Posterior vena cava (tissue), 2 donors: ENCODE measurements at regions of chr15 and their contacts with region 1.

Region 1: GRCh38 chr15:77118882-77119321 is 48.0 kb upstream of the TSPAN3 start:
- DNase-seq: no peak

Region 2: DNA sequence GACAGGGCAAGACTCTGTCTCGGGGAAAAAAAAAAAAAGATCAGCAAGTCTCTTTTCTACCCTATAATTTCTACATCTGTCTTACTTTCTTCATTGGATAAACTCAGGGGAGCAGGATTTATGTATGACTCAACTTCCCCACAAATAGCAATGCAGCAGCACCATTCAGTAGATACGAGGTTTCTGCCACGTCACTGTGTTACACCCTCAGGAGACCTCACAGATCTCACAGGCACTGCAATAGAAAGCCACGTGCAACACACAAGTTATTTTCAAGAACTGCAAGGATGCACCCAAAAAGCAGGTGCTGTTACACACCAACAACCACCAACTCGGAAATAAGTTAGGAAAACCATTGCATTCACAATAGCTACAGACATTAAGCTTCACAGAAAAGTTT is 78.2 kb before region 1 on chr15:
- intact Hi-C with region 1: no loop called
- DNase-seq: no peak

Region 3: GRCh38 chr15:77083381-77084162 is 35.3 kb before region 1 on chr15:
- intact Hi-C with region 1: no loop called
- DNase-seq: peak; percentile 88

Region 4: GRCh38 chr15:77160562-77161478 is 41.9 kb after region 1 on chr15:
- intact Hi-C with region 1: loop called in 1 of 2 experiments (anchors 2 kb)
- DNase-seq: no peak

Region 5: DNA sequence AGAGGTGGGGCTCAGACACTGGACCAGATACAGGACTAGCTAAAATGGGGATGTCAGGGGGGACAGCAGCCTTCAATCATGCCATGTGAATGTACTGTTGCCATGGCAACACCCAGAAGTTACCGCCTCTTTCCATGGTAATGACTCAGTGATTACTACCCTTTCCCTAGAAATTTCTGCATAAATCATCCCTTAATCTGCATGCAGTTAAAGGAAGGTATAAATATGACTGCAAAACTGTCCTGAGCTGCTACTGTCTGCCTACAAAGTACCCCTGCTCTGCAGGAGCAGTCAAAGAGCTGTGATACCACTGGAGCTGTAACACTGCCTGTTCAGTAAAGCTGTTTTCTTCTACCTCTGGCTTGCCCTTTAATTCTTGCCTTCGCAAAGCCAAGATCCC is 132.8 kb after region 1 on chr15:
- intact Hi-C with region 1: no loop called
- DNase-seq: no peak

Region 6: DNA sequence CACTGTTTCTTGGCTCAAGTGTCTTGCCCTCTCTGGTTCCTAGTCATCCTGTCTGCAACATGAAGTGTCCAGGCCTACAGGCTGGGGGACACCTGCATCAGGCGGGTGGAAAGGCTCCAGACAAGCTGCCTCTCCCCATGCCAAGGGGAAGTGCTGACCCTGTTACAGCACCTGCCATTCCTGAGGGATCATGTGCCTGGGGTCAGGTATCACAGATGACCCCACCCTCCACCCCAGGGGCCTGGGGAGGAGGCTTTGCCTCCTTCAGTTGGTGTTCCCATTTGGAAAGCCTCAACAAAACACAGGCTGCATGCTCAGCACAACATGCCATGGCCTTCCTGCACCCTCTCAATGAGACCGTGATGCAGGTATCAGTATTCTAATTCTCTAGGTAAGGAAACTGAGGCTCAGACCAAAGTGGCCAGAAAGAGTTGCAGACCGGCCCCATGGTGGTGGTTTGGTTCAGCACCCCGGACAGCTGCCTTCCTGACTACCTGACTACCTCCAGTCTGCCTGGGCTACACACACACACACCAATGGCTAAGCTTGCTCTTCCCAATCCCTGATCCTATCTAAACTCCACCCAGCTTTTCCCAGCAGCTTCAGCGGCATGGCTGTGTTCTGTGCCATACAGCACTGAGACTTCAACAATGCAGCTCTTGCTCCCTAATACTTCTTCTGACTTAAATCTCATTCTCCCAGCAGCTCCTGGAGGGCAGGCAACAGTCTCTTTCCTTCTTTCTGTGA is 583.5 kb after region 1 on chr15:
- intact Hi-C with region 1: no loop called
- DNase-seq: no peak